Esophagus squamous epithelium (tissue), 5 donors: ENCODE measurements at regions of chr9 and their contacts with region 1.

Region 1: GRCh38 chr9:15416880-15417279 is 5.8 kb upstream of the SNAPC3 start:
- DNase-seq: no peak
- H3K4me3 ChIP-seq: no peak overlapping the region
- H3K27ac ChIP-seq: no peak overlapping the region
- H3K4me1 ChIP-seq: peaks cover 0 to 4% (median 3%) of the 10 kb centered on the region in 3 donors
- H3K27me3 ChIP-seq: no peaks in the 10 kb centered on the region
- CTCF ChIP-seq: peak; percentile 14 to 54 (median 28)
- POLR2A ChIP-seq: no peak

Region 2: GRCh38 chr9:15211160-15211814 is 205.6 kb before region 1 on chr9:
- intact Hi-C with region 1: loop called (anchors 10 kb)
- DNase-seq: no peak
- H3K4me3 ChIP-seq: no peak overlapping the region
- H3K27ac ChIP-seq: peak overlapping the region in 2 of 4 donors; percentile 25 to 48
- H3K4me1 ChIP-seq: peaks cover 0 to 15% (median 0%) of the 10 kb centered on the region in 3 donors
- H3K27me3 ChIP-seq: no peaks in the 10 kb centered on the region
- CTCF ChIP-seq: peak; percentile 74 to 84 (median 80)
- POLR2A ChIP-seq: no peak

Region 3: GRCh38 chr9:15277400-15278090 is 139.3 kb before region 1 on chr9:
- intact Hi-C with region 1: loop called (anchors 10 kb)
- DNase-seq: no peak
- H3K4me3 ChIP-seq: no peak overlapping the region
- H3K27ac ChIP-seq: no peak overlapping the region
- H3K4me1 ChIP-seq: peaks cover 0 to 9% (median 0%) of the 10 kb centered on the region in 3 donors
- H3K27me3 ChIP-seq: no peaks in the 10 kb centered on the region
- CTCF ChIP-seq: peak in 5 of 6 experiments; percentile 12 to 39 (median 28)
- POLR2A ChIP-seq: no peak

Region 4: DNA sequence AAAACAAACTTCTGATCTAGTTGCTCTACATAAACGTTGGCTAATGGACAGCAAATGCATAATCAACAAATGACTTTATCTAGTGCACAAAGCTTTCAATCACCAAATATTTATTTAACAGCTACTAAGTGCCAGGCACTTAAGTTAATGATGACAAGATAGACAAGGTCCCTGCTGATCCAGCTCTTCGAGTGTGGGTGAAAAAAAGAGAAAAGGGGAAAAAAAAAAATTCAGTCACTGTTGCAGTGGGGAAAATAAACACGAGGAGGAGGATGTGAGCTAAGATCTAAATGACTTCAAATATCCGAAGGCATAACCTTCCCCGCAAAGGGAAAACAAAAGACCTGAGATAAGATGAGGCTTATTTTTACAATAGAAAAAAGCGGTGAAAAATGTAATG is 84.3 kb after region 1 on chr9:
- intact Hi-C with region 1: no loop called
- DNase-seq: no peak
- H3K4me3 ChIP-seq: no peak overlapping the region
- H3K27ac ChIP-seq: no peak overlapping the region
- H3K4me1 ChIP-seq: no peaks in the 10 kb centered on the region
- H3K27me3 ChIP-seq: no peaks in the 10 kb centered on the region
- CTCF ChIP-seq: no peak
- POLR2A ChIP-seq: no peak